CD8-positive, alpha-beta T cell (primary cell): ENCODE measurements at regions of chr1 and their contacts with region 1.

Region 1: GRCh38 chr1:28329395-28330153 is 734 bp downstream of the MED18 start:
- DNase-seq: peak in 6 of 9 experiments; percentile 18 to 72 (median 46)
- ATAC-seq: peak; percentile 20
- H3K4me3 ChIP-seq: peak overlapping the region; percentile 53 to 57
- H3K4me3 Mint-ChIP-seq: peak overlapping the region; percentile 95
- H3K27ac ChIP-seq: peak overlapping the region; percentile 84 to 86
- H3K27ac Mint-ChIP-seq: peak overlapping the region; percentile 98
- H3K4me1 ChIP-seq: peaks cover 20% of the 10 kb centered on the region
- H3K4me1 Mint-ChIP-seq: peaks cover 34% of the 10 kb centered on the region
- H3K27me3 ChIP-seq: no peaks in the 10 kb centered on the region
- H3K27me3 Mint-ChIP-seq: no peaks in the 10 kb centered on the region
- CTCF ChIP-seq: no peak

Region 2: DNA sequence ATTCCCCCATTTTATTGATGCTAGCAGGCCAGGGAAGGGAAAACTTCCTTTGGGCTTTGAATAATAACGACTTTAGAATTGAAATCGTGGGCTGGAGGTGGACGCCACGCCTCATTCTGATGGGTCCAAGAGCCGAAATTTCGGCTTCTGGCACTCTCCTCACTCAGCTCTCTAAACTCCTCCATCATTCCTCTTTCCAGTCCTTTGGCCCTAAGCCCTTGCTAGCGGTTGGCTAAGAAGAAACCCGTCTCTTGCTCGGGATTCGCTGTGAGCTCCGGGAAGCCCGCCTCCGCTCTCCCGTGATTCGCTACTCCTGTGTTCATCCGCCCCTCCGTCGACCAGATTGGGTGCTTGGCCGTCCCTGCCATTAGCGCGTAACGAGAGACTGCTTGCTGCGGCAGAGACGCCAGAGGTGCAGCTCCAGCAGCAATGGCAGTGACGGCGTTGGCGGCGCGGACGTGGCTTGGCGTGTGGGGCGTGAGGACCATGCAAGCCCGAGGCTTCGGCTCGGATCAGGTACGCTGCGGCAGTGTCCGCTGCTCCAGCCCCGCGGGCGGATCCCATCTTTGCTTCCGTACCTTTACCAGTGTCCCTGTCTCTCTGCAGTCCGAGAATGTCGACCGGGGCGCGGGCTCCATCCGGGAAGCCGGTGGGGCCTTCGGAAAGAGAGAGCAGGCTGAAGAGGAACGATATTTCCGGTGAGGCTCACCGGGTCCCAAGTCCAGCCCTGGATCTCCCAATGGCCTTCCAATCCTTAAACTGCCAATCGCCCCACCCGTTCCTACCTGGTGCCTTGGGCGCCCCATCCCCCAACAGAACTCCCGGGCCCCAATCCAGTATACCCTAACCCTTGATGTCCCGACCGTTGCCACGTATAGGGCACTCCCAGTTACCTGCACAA is 93.6 kb before region 1 on chr1 and contains the start of gene ATP5IF1:
- CTCF ChIA-PET with region 1: no interaction called
- POLR2A ChIA-PET with region 1: interaction called, 8 read pairs
- intact Hi-C with region 1: loop called in 1 of 2 experiments (anchors 5 kb)
- DNase-seq: peak; percentile 90 to 98 (median 94)
- ATAC-seq: peak; percentile 95
- H3K4me3 ChIP-seq: peak within 1 kb of the TSS; percentile 80 to 96
- H3K4me3 Mint-ChIP-seq: no peak within 1 kb of the TSS
- H3K27ac ChIP-seq: peak within 1 kb of the TSS; percentile 84 to 96
- H3K27ac Mint-ChIP-seq: no peak within 1 kb of the TSS
- H3K4me1 ChIP-seq: peaks cover 41% of the 10 kb centered on the region
- H3K4me1 Mint-ChIP-seq: peaks cover 21% of the 10 kb centered on the region
- H3K27me3 ChIP-seq: no peaks in the 10 kb centered on the region
- H3K27me3 Mint-ChIP-seq: no peaks in the 10 kb centered on the region
- CTCF ChIP-seq: no peak
- total RNA-seq, gene ATP5IF1: 66.1 to 69.3 TPM

Region 3: DNA sequence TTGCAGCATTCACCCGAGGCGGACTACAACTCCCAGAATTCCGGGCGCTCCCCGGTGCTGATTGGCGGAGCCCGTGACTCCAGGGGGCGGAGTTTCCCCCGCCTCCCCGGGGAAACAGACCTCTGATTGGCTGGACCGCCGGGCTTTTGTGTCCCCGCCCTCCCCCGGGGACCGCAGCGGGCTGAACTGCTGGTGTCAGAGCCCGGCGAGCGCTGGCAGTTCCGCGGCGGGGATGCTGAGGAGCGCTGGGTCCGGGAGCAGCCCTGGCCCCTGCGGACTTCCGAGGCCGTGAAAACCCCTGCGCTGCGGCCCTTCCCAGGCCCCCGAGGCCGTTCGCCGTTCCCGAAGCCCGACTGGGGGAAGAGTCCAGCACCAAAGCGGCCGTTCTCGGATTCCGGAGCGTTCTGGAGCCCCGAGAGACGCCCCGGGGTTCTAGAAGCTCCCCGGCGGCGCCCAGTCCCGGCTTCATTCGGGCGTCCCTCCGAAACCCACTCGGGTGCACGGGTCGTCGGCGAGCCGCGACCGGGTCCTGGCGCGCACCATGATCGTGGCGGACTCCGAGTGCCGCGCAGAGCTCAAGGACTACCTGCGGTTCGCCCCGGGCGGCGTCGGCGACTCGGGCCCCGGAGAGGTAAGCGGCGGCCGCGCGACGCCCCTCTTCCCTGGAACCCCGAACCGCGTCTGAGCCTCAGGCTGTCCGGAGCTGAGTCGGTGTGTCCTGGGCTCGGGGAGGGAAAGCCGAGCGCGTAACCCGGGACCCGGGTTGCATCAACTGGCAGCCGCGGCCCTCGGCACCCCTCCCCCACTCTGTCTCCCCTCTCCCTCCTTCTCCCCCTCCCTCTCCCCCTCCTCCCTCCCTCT is 70.0 kb before region 1 on chr1 and contains the start of gene SESN2:
- CTCF ChIA-PET with region 1: interaction called, 7 read pairs
- POLR2A ChIA-PET with region 1: interaction called, 16 read pairs
- intact Hi-C with region 1: loop called (anchors 1 kb)
- DNase-seq: peak; percentile 98 to 99 (median 99)
- ATAC-seq: peak; percentile 97
- H3K4me3 ChIP-seq: peak within 1 kb of the TSS; percentile 86 to 87
- H3K4me3 Mint-ChIP-seq: peak within 1 kb of the TSS; percentile 85
- H3K27ac ChIP-seq: peak within 1 kb of the TSS; percentile 52 to 72
- H3K27ac Mint-ChIP-seq: peak within 1 kb of the TSS; percentile 64
- H3K4me1 ChIP-seq: peaks cover 47% of the 10 kb centered on the region
- H3K4me1 Mint-ChIP-seq: peaks cover 44% of the 10 kb centered on the region
- H3K27me3 ChIP-seq: no peaks in the 10 kb centered on the region
- H3K27me3 Mint-ChIP-seq: no peaks in the 10 kb centered on the region
- CTCF ChIP-seq: no peak
- total RNA-seq, gene SESN2: 15.0 to 15.3 TPM

Region 4: DNA sequence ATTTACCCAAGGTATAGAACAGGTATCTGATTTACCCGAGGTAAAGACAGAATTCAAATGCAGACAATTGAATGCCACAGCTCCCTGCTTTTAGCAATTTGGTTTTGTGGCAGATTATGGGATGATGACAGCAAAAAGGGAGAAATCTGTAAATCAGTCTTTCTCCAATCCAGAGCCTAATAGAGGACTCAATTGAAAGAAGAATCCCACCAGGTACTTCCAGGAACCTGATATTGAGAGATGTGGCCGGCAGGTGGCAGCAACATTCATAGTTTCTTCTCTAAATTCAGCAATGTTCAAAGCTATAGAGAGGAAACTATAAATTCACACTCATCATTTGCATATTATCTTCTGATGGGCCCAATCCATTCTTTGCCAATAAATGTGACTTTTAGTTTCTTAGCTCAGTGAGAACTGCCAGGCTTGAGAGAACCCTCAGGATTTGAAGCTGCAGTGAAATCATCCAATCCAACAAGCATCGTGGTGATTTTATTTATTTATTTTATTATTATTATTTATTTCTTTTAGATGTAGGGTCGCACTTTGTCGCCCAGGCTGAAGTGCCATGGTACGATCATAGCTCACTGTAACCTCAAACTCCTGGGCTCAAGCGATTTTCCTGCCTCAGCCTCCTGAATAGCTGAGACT is 30.1 kb after region 1 on chr1:
- CTCF ChIA-PET with region 1: interaction called, 11 read pairs
- POLR2A ChIA-PET with region 1: interaction called, 3 read pairs
- intact Hi-C with region 1: no loop called
- DNase-seq: peak; percentile 50 to 83 (median 75)
- ATAC-seq: peak; percentile 75
- H3K4me3 ChIP-seq: no peak overlapping the region
- H3K4me3 Mint-ChIP-seq: no peak overlapping the region
- H3K27ac ChIP-seq: no peak overlapping the region
- H3K27ac Mint-ChIP-seq: no peak overlapping the region
- H3K4me1 ChIP-seq: no peaks in the 10 kb centered on the region
- H3K4me1 Mint-ChIP-seq: peaks cover 2% of the 10 kb centered on the region
- H3K27me3 ChIP-seq: no peaks in the 10 kb centered on the region
- H3K27me3 Mint-ChIP-seq: no peaks in the 10 kb centered on the region
- CTCF ChIP-seq: peak; percentile 79

Region 5: GRCh38 chr1:28369371-28370238 is 40.0 kb after region 1 on chr1 and contains the start of gene PHACTR4:
- CTCF ChIA-PET with region 1: interaction called, 5 read pairs
- POLR2A ChIA-PET with region 1: interaction called, 5 read pairs
- intact Hi-C with region 1: loop called (anchors 1 kb)
- DNase-seq: peak; percentile 44 to 87 (median 76)
- ATAC-seq: peak; percentile 88
- H3K4me3 ChIP-seq: peak within 1 kb of the TSS; percentile 70 to 90
- H3K4me3 Mint-ChIP-seq: peak within 1 kb of the TSS; percentile 96
- H3K27ac ChIP-seq: peak within 1 kb of the TSS; percentile 67 to 83
- H3K27ac Mint-ChIP-seq: peak within 1 kb of the TSS; percentile 94
- H3K4me1 ChIP-seq: peaks cover 5% of the 10 kb centered on the region
- H3K4me1 Mint-ChIP-seq: peaks cover 34% of the 10 kb centered on the region
- H3K27me3 ChIP-seq: no peaks in the 10 kb centered on the region
- H3K27me3 Mint-ChIP-seq: no peaks in the 10 kb centered on the region
- CTCF ChIP-seq: peak; percentile 30
- total RNA-seq, gene PHACTR4: 19.3 to 25.2 TPM

Region 6: GRCh38 chr1:28668191-28668955 is 338.8 kb after region 1 on chr1 and contains the start of gene GMEB1:
- CTCF ChIA-PET with region 1: no interaction called
- POLR2A ChIA-PET with region 1: no interaction called
- intact Hi-C with region 1: loop called in 1 of 2 experiments (anchors 2 kb)
- DNase-seq: peak; percentile 66 to 91 (median 82)
- ATAC-seq: peak; percentile 61
- H3K4me3 ChIP-seq: peak within 1 kb of the TSS; percentile 83 to 98
- H3K4me3 Mint-ChIP-seq: peak within 1 kb of the TSS; percentile 92
- H3K27ac ChIP-seq: peak within 1 kb of the TSS; percentile 81 to 98
- H3K27ac Mint-ChIP-seq: peak within 1 kb of the TSS; percentile 97
- H3K4me1 ChIP-seq: peaks cover 9% of the 10 kb centered on the region
- H3K4me1 Mint-ChIP-seq: peaks cover 22% of the 10 kb centered on the region
- H3K27me3 ChIP-seq: no peaks in the 10 kb centered on the region
- H3K27me3 Mint-ChIP-seq: no peaks in the 10 kb centered on the region
- CTCF ChIP-seq: no peak
- total RNA-seq, gene GMEB1: 12.9 to 13.6 TPM